Posterior vena cava (tissue), 2 donors: ENCODE measurements at regions of chr1 and their contacts with region 1.

Region 1: GRCh38 chr1:114884456-114884990 is 29.9 kb downstream of the SYCP1 start:
- DNase-seq: no peak

Region 2: GRCh38 chr1:114861384-114861783 is 23.1 kb before region 1 on chr1:
- intact Hi-C with region 1: loop called in 1 of 2 experiments (anchors 1 kb)
- DNase-seq: no peak